GM13977 (cell line): ENCODE measurements at regions of chr1 and their contacts with region 1.

Region 1: GRCh38 chr1:193406901-193407300 is 220.5 kb upstream of the B3GALT2 start:
- DNase-seq: peak; percentile 20
- CTCF ChIP-seq: peak; percentile 79

Region 2: GRCh38 chr1:194295685-194296084 is 888.8 kb after region 1 on chr1:
- in situ Hi-C with region 1: loop called (anchors 25 kb)
- DNase-seq: peak; percentile 12
- CTCF ChIP-seq: peak; percentile 81